Left ventricle myocardium inferior (tissue), 1 donor: ENCODE measurements at regions of chr3 and their contacts with region 1.

Region 1: GRCh38 chr3:4350789-4351163 is 47.6 kb downstream of the SETMAR start:
- DNase-seq: no peak
- H3K4me3 ChIP-seq: peak overlapping the region; percentile 53
- H3K27ac ChIP-seq: peak overlapping the region; percentile 72
- H3K4me1 ChIP-seq: peaks cover 19% of the 10 kb centered on the region
- H3K27me3 ChIP-seq: no peaks in the 10 kb centered on the region
- CTCF ChIP-seq: peak; percentile 81

Region 2: GRCh38 chr3:4174773-4175172 is 176.0 kb before region 1 on chr3:
- intact Hi-C with region 1: no loop called
- DNase-seq: no peak
- H3K4me3 ChIP-seq: no peak overlapping the region
- H3K27ac ChIP-seq: no peak overlapping the region
- H3K4me1 ChIP-seq: no peaks in the 10 kb centered on the region
- H3K27me3 ChIP-seq: no peaks in the 10 kb centered on the region
- CTCF ChIP-seq: no peak

Region 3: GRCh38 chr3:4493014-4493940 is 142.5 kb after region 1 on chr3 and contains the start of gene ITPR1:
- intact Hi-C with region 1: loop called (anchors 10 kb)
- DNase-seq: peak; percentile 98
- H3K4me3 ChIP-seq: peak within 1 kb of the TSS; percentile 98
- H3K27ac ChIP-seq: peak within 1 kb of the TSS; percentile 95
- H3K4me1 ChIP-seq: peaks cover 62% of the 10 kb centered on the region
- H3K27me3 ChIP-seq: no peaks in the 10 kb centered on the region
- CTCF ChIP-seq: no peak
- total RNA-seq, gene ITPR1: 29.0 TPM

Region 4: GRCh38 chr3:4534906-4535305 is 184.1 kb after region 1 on chr3:
- intact Hi-C with region 1: no loop called
- DNase-seq: no peak
- H3K4me3 ChIP-seq: no peak overlapping the region
- H3K27ac ChIP-seq: peak overlapping the region; percentile 54
- H3K4me1 ChIP-seq: peaks cover 59% of the 10 kb centered on the region
- H3K27me3 ChIP-seq: no peaks in the 10 kb centered on the region
- CTCF ChIP-seq: no peak

Region 5: GRCh38 chr3:4633078-4634004 is 282.6 kb after region 1 on chr3:
- intact Hi-C with region 1: loop called (anchors 2 kb)
- DNase-seq: no peak
- H3K4me3 ChIP-seq: no peak overlapping the region
- H3K27ac ChIP-seq: no peak overlapping the region
- H3K4me1 ChIP-seq: peaks cover 6% of the 10 kb centered on the region
- H3K27me3 ChIP-seq: no peaks in the 10 kb centered on the region
- CTCF ChIP-seq: peak; percentile 91

Region 6: DNA sequence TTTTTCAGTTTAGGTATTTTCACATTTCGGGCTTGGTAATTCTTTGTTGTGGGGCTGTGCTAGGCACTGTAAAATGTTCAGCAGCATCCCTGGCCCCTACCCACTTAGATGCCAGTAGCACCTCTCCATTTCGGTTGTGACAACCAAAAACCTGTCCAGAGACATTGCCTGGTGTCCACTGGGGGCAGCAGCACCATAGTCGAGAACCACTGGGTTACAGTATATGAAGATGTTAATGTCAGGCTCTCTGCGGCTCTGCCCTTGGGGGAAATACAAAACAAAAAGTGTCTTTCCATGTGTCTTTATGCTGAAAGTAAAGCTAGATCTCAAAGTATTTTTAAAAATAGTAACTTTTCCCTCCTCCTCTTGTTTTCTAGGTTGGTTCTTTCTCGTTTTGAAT is 319.6 kb after region 1 on chr3:
- intact Hi-C with region 1: no loop called
- DNase-seq: no peak
- H3K4me3 ChIP-seq: no peak overlapping the region
- H3K27ac ChIP-seq: no peak overlapping the region
- H3K4me1 ChIP-seq: peaks cover 15% of the 10 kb centered on the region
- H3K27me3 ChIP-seq: no peaks in the 10 kb centered on the region
- CTCF ChIP-seq: peak; percentile 35